ENCODE measurements at regions of chr16 and their contacts with region 1.

Region 1: GRCh38 chr16:84726079-84726668 is 26.4 kb downstream of the USP10 start:
- DNase-seq: peak; percentile 36 to 93
- H3K4me3 ChIP-seq: peak overlapping the region in 1 of 4 experiments; percentile 37; a peak in 1 of 8 replicates
- H3K27ac ChIP-seq: no peak overlapping the region
- H3K4me1 ChIP-seq: peaks cover 5 to 20% (median 15%) of the 10 kb centered on the region in 4 experiments; a peak in 5 of 7 replicates
- H3K27me3 ChIP-seq: no peaks in the 10 kb centered on the region
- CTCF ChIP-seq: peak; percentile 81 to 93 (median 85)
- EP300 ChIP-seq: no peak
- POLR2A ChIP-seq: no peak
- RAD21 ChIP-seq: peak; percentile 88 to 89

Region 2: GRCh38 chr16:84471316-84471715 is 254.9 kb before region 1 on chr16:
- CTCF ChIA-PET with region 1: no interaction called
- POLR2A ChIA-PET with region 1: no interaction called
- DNase-seq: no peak
- H3K4me3 ChIP-seq: no peak overlapping the region
- H3K27ac ChIP-seq: no peak overlapping the region
- H3K4me1 ChIP-seq: no peaks in the 10 kb centered on the region
- H3K27me3 ChIP-seq: no peaks in the 10 kb centered on the region
- CTCF ChIP-seq: no peak
- EP300 ChIP-seq: no peak
- POLR2A ChIP-seq: no peak
- RAD21 ChIP-seq: no peak

Region 3: GRCh38 chr16:84629580-84629979 is 96.6 kb before region 1 on chr16:
- CTCF ChIA-PET with region 1: interaction called, 15 read pairs
- POLR2A ChIA-PET with region 1: no interaction called
- DNase-seq: no peak
- H3K4me3 ChIP-seq: no peak overlapping the region
- H3K27ac ChIP-seq: no peak overlapping the region
- H3K4me1 ChIP-seq: peaks cover 0 to 6% (median 3%) of the 10 kb centered on the region in 4 experiments; a peak in 3 of 7 replicates
- H3K27me3 ChIP-seq: no peaks in the 10 kb centered on the region
- CTCF ChIP-seq: no peak
- EP300 ChIP-seq: no peak
- POLR2A ChIP-seq: no peak
- RAD21 ChIP-seq: no peak

Region 4: DNA sequence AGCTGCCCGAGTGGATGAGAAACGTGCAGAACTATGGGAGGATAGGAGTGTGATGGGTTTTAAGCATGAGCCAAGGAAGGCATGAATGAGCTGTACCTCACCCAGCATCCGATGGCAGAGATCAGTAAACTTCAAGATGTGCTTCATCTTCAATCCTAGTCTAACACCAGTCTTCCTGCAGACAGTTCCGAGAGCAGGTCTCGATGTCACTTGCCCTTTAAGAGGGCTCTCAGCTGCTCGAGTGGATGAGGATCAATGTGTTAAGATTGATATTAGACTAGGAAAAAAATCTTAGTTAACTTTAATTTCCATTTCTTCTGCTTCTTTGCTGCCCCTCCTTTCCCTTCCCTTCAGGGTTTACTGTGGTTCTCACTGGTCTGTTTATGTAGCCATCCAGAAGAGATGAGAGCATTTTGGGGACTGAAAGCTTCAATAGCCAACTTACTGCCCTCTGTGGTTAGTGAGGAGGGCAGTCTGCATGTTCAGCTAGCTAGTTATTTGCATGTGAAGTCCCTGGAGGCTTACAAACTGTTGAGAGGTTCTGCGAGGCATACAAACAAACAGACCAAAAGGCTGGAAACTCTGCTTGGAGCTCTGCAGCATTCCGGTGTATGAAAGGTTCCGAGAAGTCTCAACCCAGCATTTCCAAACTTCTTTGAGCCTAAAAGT is 62.6 kb before region 1 on chr16:
- CTCF ChIA-PET with region 1: interaction called, 98 read pairs
- POLR2A ChIA-PET with region 1: no interaction called
- DNase-seq: no peak
- H3K4me3 ChIP-seq: no peak overlapping the region
- H3K27ac ChIP-seq: no peak overlapping the region
- H3K4me1 ChIP-seq: peaks cover 1 to 9% (median 6%) of the 10 kb centered on the region in 4 experiments; a peak in 4 of 7 replicates
- H3K27me3 ChIP-seq: no peaks in the 10 kb centered on the region
- CTCF ChIP-seq: no peak
- EP300 ChIP-seq: no peak
- POLR2A ChIP-seq: no peak
- RAD21 ChIP-seq: no peak

Region 5: DNA sequence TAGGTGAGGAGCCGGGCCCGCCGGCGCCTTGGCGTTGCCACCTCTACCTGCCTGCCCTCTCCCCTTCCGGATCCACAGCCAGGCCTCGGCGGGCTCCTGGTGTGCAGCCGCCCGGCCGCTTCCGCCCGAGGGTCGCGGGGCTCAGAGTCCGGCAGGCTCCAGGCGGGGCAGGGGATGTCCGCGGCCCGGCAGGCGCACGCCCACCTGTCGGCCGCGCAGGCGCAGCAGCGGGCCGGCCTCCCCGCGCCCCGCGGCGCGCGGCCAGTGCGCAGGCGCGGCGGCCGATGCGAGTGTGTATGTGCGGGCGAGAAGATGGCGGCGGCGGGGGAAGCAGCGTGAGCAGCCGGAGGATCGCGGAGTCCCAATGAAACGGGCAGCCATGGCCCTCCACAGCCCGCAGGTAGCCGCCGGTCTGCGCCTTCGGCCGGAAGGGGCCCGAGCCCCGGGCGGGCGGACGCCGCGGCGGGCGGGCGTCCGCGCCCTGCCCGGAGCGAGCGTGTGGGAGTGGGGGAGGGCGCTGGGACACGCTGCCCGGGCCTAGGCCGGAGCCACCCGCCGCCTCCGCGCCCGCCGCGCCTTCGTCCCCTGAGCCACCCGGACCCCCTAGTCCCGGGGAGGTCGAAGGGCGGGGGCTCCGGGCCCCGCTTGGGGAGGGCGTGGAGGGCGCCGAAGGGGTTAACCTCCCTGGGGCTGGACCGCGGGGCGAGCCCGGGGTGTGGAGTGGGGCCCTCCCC is 26.3 kb before region 1 on chr16 and contains the start of gene USP10:
- CTCF ChIA-PET with region 1: interaction called, 16 read pairs
- POLR2A ChIA-PET with region 1: interaction called, 4 read pairs
- DNase-seq: peak; percentile 71 to 88
- H3K4me3 ChIP-seq: peak within 1 kb of the TSS; percentile 84 to 99 (median 88)
- H3K27ac ChIP-seq: peak within 1 kb of the TSS; percentile 92
- H3K4me1 ChIP-seq: peaks cover 0 to 9% (median 7%) of the 10 kb centered on the region in 4 experiments; a peak in 5 of 7 replicates
- H3K27me3 ChIP-seq: no peaks in the 10 kb centered on the region
- CTCF ChIP-seq: no peak
- EP300 ChIP-seq: 0 out of 3 replicates have a peak, but pooled peaks of 1 of the 2 experiments have one; percentile 34
- POLR2A ChIP-seq: peak; percentile 67 to 82; a peak in 2 of 3 replicates
- RAD21 ChIP-seq: no peak
- total RNA-seq, gene USP10: 186 and 195 TPM in 2 replicates

Region 6: GRCh38 chr16:84746882-84747281 is 20.7 kb after region 1 on chr16:
- CTCF ChIA-PET with region 1: interaction called, 137 read pairs
- POLR2A ChIA-PET with region 1: no interaction called
- DNase-seq: no peak
- H3K4me3 ChIP-seq: no peak overlapping the region
- H3K27ac ChIP-seq: no peak overlapping the region
- H3K4me1 ChIP-seq: no peaks in the 10 kb centered on the region; a peak in 1 of 7 replicates
- H3K27me3 ChIP-seq: no peaks in the 10 kb centered on the region
- CTCF ChIP-seq: peak; percentile 43 to 63 (median 62)
- EP300 ChIP-seq: no peak
- POLR2A ChIP-seq: no peak
- RAD21 ChIP-seq: no peak; a peak in 1 of 4 replicates